GM10248 (cell line): ENCODE measurements at regions of chr2 and their contacts with region 1.

Region 1: DNA sequence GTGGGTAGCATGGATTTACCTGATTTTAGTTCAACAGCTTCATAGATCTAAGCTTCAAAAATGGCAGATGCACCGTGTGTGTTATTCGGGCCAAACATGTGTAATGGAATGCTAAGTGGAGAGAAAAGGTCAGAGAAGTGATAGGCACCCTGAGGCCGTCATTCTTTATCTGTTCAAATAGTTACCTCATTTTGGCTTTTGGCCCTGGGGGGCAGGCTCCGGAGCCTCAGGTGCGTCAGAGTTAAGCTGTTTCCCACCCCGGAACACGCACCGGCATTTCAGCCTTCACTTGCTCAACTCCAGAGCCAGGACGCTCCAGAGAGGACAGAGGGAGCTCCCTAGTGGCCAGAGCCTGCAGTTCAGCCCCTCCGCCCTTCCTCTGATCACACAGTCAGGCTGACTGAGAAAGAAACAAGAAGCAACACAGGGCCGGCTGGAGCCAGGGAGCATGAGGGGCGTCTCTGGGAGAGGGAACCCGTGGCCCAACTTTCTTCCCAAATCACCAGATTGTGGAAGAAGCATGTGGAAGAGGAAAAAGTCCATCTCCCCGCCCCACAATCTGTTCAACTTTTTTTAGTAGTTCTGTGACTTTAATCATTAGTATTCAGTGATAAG is 135.2 kb upstream of the EPC2 start:
- DNase-seq: peak; percentile 87
- CTCF ChIP-seq: peak; percentile 95

Region 2: DNA sequence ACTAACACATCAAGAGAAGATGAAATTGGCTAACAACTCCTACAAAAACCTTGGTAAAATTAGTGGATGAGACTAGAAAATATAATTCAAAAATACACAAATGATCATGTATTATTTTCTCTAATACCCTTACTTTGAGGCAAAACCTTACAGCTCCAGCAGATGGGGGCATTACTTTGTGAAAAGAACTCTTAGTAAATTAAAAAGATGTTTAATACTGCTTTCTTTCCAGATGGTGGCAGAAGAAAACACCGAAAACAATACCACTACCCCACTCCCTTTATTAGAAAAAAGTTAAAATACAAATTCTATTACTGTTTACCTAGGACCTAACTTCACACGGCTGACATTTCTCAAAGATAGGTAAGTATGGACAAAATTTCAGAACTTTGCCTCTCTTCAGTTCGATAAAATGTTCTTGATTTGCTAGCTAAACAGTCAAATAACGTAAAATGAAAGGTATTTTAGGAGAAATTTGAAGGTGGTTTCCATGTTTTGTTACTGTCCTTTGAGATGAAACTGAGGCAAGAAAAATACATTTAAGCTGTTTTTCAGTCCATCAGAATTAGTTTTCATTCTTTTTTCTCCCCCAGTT is 519.5 kb before region 1 on chr2:
- CTCF ChIA-PET with region 1: interaction called, 49 read pairs
- POLR2A ChIA-PET with region 1: interaction called, 4 read pairs
- DNase-seq: peak; percentile 62
- CTCF ChIP-seq: peak; percentile 67

Region 3: DNA sequence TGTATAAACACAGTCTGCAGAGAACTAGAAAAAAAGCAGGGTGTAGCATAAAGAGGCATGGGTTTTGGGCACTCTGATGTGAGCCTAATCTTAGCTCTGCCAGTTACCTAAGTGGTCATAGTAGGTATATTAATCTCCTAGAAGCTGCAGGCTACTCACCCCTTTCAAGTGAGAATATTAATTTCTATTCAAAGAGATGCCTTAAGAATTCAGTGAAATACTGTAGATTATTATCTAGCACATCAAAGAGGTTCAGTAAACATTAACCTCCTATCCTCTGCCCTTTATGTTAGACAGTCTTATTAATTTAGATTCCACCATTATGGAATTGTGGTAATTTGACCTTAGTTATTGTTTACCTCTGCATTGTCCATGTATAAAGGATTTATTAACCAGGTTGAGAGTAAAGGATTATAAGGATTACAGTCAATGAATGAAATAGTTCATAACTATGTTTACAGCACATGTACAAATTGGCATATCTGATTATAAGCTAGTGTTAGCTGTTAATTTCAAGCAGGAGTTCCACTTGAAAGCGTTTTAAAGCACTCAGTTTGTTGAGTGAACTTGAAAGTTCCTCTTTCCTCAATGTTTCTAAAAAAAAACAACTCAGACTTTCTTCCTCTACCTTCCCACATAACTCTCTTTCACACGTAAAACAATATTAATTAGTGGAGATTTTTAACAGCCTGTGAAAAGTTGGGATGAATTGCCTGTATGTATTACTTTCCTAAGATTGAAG is 15.4 kb before region 1 on chr2:
- CTCF ChIA-PET with region 1: interaction called, 31 read pairs
- POLR2A ChIA-PET with region 1: interaction called, 3 read pairs
- DNase-seq: peak; percentile 25
- CTCF ChIP-seq: no peak

Region 4: DNA sequence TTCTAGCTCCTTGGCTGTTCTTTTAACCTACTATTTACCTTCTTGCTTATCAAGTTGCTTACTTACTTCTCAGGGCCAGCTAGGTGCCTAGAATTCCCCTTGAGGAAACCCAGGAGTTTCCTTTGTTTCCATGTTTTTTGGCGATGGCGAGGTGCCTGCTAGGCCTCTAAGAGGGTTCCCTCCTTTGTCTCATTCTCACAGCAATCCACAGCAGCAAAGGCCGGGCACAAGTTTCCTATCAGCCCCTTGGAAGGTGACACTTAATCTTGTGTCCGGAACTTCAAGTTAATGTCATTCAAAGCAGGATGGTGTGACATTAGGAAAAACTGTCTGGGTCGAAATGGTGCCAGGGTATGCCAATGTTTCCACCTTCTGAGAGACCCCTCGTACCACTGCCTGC is 33.2 kb after region 1 on chr2:
- CTCF ChIA-PET with region 1: interaction called, 11 read pairs
- POLR2A ChIA-PET with region 1: no interaction called
- DNase-seq: no peak
- CTCF ChIP-seq: no peak